Upper lobe of right lung (tissue), 1 donor: ENCODE measurements at regions of chr9 and their contacts with region 1.

Region 1: GRCh38 chr9:75866273-75866871 is 24.1 kb upstream of the PCSK5 start:
- DNase-seq: no peak
- ATAC-seq: peak; percentile 54
- H3K4me3 ChIP-seq: no peak overlapping the region
- H3K27ac ChIP-seq: no peak overlapping the region
- H3K4me1 ChIP-seq: peaks cover 4% of the 10 kb centered on the region
- H3K27me3 ChIP-seq: no peaks in the 10 kb centered on the region
- CTCF ChIP-seq: peak; percentile 84

Region 2: GRCh38 chr9:75185585-75186170 is 680.7 kb before region 1 on chr9:
- intact Hi-C with region 1: loop called (anchors 10 kb)
- DNase-seq: no peak
- ATAC-seq: peak; percentile 82
- H3K4me3 ChIP-seq: no peak overlapping the region
- H3K27ac ChIP-seq: no peak overlapping the region
- H3K4me1 ChIP-seq: no peaks in the 10 kb centered on the region
- H3K27me3 ChIP-seq: no peaks in the 10 kb centered on the region
- CTCF ChIP-seq: peak; percentile 64

Region 3: GRCh38 chr9:75624998-75625397 is 241.4 kb before region 1 on chr9:
- intact Hi-C with region 1: no loop called
- DNase-seq: no peak
- ATAC-seq: no peak
- H3K4me3 ChIP-seq: no peak overlapping the region
- H3K27ac ChIP-seq: no peak overlapping the region
- H3K4me1 ChIP-seq: no peaks in the 10 kb centered on the region
- H3K27me3 ChIP-seq: no peaks in the 10 kb centered on the region
- CTCF ChIP-seq: no peak

Region 4: DNA sequence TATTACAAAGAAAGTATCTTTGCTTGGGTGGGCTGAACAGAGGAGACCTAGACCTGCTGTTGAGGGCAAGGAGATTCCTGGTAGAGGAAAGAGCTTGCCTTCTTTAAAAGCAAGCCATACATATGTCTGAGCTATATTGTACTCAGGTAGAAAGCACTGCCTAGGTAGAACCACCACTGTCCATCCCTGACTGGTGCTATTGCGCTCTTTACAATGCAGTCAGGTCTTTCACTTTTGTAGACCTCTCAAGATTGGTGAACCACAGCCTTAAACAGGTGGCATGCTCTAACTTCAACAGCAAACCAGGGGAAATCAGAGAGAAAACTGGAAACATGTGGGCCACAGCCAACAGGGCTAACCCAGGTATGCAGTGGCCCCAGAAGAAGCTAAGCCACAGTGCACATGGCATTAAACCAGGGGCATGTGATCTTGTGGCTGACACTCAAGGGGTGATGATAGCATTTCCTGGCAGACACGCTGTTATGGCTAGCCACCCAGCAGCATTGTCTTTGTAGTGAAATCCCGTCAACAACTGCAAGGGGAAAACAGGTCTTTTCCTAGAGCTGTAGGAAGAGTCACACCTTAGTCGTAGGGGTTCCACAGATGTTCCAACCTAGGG is 229.8 kb before region 1 on chr9:
- intact Hi-C with region 1: no loop called
- DNase-seq: no peak
- ATAC-seq: no peak
- H3K4me3 ChIP-seq: no peak overlapping the region
- H3K27ac ChIP-seq: no peak overlapping the region
- H3K4me1 ChIP-seq: no peaks in the 10 kb centered on the region
- H3K27me3 ChIP-seq: no peaks in the 10 kb centered on the region
- CTCF ChIP-seq: no peak

Region 5: GRCh38 chr9:76032038-76032796 is 165.8 kb after region 1 on chr9:
- intact Hi-C with region 1: no loop called
- DNase-seq: no peak
- ATAC-seq: no peak
- H3K4me3 ChIP-seq: no peak overlapping the region
- H3K27ac ChIP-seq: no peak overlapping the region
- H3K4me1 ChIP-seq: no peaks in the 10 kb centered on the region
- H3K27me3 ChIP-seq: no peaks in the 10 kb centered on the region
- CTCF ChIP-seq: no peak

Region 6: DNA sequence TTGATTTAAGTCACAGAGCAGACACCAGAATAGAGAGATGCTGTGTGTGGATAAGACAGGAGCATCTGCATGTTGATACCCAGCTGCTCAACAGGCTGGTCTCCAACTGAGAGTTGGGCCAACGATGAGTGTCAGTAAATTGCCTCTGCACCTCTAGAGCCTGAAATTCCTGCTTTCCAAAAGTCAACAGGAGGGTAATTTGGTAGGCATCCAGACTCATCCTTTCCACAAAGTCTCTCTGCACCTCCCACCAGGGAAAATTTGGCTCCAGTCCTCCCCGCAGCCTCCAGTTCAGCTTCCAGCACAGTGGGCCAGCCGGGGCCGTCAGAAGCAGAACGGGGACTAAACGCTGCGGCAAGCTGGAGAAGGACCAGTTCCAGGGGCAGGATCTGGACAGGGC is 390.9 kb after region 1 on chr9:
- intact Hi-C with region 1: no loop called
- DNase-seq: no peak
- ATAC-seq: no peak
- H3K4me3 ChIP-seq: no peak overlapping the region
- H3K27ac ChIP-seq: no peak overlapping the region
- H3K4me1 ChIP-seq: peaks cover 8% of the 10 kb centered on the region
- H3K27me3 ChIP-seq: no peaks in the 10 kb centered on the region
- CTCF ChIP-seq: no peak